HCT116 (cell line): ENCODE measurements at regions of chr19 and their contacts with region 1.

Region 1: DNA sequence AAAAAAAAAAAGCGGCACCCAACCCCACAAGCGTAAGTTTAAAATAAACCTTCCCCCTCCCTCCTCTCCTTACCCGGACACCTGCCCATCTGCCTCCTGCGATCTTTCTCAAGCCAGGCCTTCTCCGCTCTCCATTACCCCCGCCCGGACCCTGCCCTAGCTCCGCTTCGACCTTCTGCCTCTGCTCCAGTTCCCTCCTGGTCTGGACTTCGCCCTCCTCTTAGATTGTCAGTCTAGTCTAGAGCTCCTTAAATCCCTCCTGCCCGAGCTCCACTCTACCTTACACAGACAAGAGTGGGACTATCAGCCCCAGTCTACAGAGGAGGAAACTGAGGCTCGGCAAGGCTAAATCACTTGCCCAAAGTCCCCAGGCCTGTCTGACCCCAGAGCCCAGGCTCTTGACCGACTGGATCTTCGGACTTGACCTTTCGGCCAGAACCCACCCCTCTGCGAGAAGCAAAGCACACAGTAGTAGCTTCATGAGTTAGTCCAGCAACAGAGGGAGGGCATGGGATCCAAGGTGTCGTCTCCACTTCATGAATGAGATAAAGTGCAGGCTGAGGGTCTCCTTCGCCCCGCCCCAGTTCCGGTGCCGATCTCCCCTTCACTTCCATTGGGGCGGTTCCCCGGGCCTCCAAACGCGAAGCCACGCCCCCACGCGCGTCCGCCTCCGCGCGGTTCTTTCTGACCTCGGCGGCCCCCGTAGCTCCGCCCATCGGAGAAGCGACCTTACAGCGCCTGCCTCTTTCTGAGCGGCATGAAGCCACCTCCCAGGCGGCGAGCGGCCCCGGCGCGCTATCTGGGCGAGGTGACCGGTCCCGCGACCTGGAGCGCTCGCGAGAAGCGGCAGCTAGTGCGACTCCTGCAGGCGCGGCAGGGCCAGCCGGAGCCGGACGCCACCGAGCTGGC is at the start of gene SNAPC2:
- DNase-seq: peak; percentile 92
- ATAC-seq: peak; percentile 61
- H3K4me3 ChIP-seq: peak within 1 kb of the TSS; percentile 66 to 74
- H3K27ac ChIP-seq: peak within 1 kb of the TSS; percentile 89
- H3K4me1 ChIP-seq: peaks cover 21 to 61% of the 10 kb centered on the region in 2 experiments; a peak in 3 of 4 replicates
- H3K27me3 ChIP-seq: no peaks in the 10 kb centered on the region
- CTCF ChIP-seq: no peak
- POLR2A ChIP-seq: no peak
- RAD21 ChIP-seq: no peak
- total RNA-seq, gene SNAPC2: 42.9 TPM

Region 2: GRCh38 chr19:7852851-7853769 is 66.8 kb before region 1 on chr19:
- CTCF ChIA-PET with region 1: interaction called, 20 read pairs
- POLR2A ChIA-PET with region 1: interaction called, 3 read pairs
- RAD21 ChIA-PET with region 1: interaction called in 1 of 2 experiments, 7 read pairs
- intact Hi-C with region 1: loop called (anchors 5 kb)
- DNase-seq: peak; percentile 85
- ATAC-seq: peak; percentile 97
- H3K4me3 ChIP-seq: peak overlapping the region in 1 of 2 experiments; percentile 9; a peak in 1 of 4 replicates
- H3K27ac ChIP-seq: no peak overlapping the region
- H3K4me1 ChIP-seq: peaks cover 11 to 18% of the 10 kb centered on the region in 2 experiments; a peak in 3 of 4 replicates
- H3K27me3 ChIP-seq: no peaks in the 10 kb centered on the region
- CTCF ChIP-seq: peak; percentile 83 to 91 (median 84)
- POLR2A ChIP-seq: no peak
- RAD21 ChIP-seq: peak; percentile 96

Region 3: DNA sequence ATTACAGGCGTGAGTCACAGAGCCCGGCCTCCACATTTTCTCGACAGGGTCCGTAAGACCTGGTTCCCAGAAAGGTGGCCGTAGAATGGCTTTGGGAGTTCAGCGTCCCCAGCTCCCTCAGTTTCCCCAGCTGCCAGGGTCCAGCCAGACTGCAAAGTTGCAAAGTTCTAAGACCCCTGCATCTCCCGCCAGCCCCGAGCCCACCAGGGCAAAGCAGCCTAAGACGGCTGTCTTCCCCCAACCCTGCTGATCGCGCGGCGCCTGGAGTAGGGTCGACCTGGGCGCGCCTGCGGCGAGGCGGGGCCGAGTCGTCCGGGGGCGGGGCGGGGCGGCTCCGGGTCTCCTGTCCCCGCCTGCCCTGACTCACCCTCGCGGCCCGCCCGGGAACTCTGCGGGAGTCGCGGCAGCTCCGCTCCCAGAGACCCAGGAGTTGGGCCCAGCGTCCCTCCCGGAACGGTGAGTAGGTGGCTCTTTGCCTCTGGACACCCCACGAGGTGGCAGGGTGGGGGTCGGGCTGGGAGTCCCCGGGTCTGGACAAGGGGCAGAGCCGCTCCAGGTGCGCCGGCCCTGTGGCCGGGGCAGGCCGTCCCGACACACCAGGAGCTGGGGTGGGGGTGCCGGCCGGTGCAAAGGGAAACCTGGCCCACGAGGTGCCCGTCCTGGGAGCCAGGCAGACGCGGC is 31.6 kb before region 1 on chr19 and contains the start of gene LRRC8E:
- CTCF ChIA-PET with region 1: no interaction called
- POLR2A ChIA-PET with region 1: interaction called, 10 read pairs
- RAD21 ChIA-PET with region 1: no interaction called
- intact Hi-C with region 1: no loop called
- DNase-seq: no peak
- ATAC-seq: peak; percentile 98
- H3K4me3 ChIP-seq: peak within 1 kb of the TSS; percentile 81 to 94
- H3K27ac ChIP-seq: peak within 1 kb of the TSS; percentile 76
- H3K4me1 ChIP-seq: peaks cover 13 to 42% of the 10 kb centered on the region in 2 experiments; a peak in 3 of 4 replicates
- H3K27me3 ChIP-seq: no peaks in the 10 kb centered on the region
- CTCF ChIP-seq: no peak
- POLR2A ChIP-seq: no peak
- RAD21 ChIP-seq: no peak
- total RNA-seq, gene LRRC8E: 18.1 TPM

Region 4: GRCh38 chr19:7903244-7904073 is 16.4 kb before region 1 on chr19 and contains the start of gene MAP2K7:
- CTCF ChIA-PET with region 1: interaction called, 18 read pairs
- POLR2A ChIA-PET with region 1: interaction called, 11 read pairs
- RAD21 ChIA-PET with region 1: no interaction called
- intact Hi-C with region 1: no loop called
- DNase-seq: peak; percentile 98
- ATAC-seq: peak; percentile 85
- H3K4me3 ChIP-seq: peak within 1 kb of the TSS; percentile 75 to 97
- H3K27ac ChIP-seq: peak within 1 kb of the TSS; percentile 92
- H3K4me1 ChIP-seq: peaks cover 3 to 30% of the 10 kb centered on the region in 2 experiments; a peak in 2 of 4 replicates
- H3K27me3 ChIP-seq: no peaks in the 10 kb centered on the region
- CTCF ChIP-seq: peak; percentile 25 to 95 (median 55); a peak in 5 of 6 replicates
- POLR2A ChIP-seq: peak; percentile 97
- RAD21 ChIP-seq: no peak; the same call in none of the 2 replicates
- total RNA-seq, gene MAP2K7: 59.1 TPM

Region 5: GRCh38 chr19:8069096-8069973 is 149.5 kb after region 1 on chr19:
- CTCF ChIA-PET with region 1: no interaction called
- POLR2A ChIA-PET with region 1: no interaction called
- RAD21 ChIA-PET with region 1: no interaction called
- intact Hi-C with region 1: no loop called
- DNase-seq: no peak
- ATAC-seq: peak; percentile 58; the same call in 1 of the 2 replicates
- H3K4me3 ChIP-seq: no peak overlapping the region
- H3K27ac ChIP-seq: no peak overlapping the region
- H3K4me1 ChIP-seq: no peaks in the 10 kb centered on the region; a peak in 1 of 4 replicates
- H3K27me3 ChIP-seq: no peaks in the 10 kb centered on the region
- CTCF ChIP-seq: peak; percentile 31 to 92 (median 90); a peak in 5 of 6 replicates
- POLR2A ChIP-seq: no peak
- RAD21 ChIP-seq: peak; percentile 55